ENCODE measurements at regions of chr10 and their contacts with region 1.

Region 1: DNA sequence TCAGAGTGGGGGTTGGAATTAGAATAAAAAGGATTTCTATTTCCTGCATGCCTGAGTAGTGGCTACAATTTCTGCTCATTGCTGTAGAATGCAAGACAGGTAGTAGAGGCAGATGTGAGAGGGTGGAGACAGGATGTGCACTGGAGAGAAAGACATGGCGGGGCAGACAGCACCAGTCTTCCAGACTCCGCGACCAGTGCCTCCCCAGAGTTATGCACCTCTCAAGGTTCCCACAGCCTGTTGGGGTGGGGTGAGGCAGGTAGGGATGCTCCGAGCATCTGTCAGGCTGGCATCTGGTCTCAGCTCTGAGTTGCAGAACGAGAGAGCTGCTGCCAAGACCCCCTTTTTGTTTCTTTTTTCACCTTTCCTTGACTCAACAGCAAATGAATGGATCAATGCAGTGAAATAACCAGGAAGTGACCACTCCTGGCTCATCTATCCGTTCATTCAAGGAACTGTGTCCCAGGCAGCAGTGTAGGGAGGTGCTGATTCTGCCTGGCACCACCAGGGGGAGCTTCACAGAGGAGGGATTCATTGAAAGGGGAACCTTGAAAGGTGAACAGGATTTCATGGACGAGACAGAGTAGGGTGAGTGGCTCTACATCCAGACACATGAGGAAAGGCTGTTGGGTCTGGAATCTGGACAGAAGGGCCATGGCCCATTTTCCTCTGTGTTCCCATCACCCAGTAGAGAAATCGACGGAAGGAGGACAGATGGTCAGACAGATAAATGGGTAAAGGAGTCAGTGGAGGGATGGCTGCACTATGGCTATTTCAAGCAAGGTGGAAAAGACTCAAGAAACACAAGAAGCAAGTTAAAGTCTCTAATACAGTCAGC is 17.2 kb upstream of the SLC18A3 start:
- DNase-seq: peak; percentile 79
- H3K4me3 ChIP-seq: no peak overlapping the region; a peak in 1 of 4 replicates
- H3K27ac ChIP-seq: no peak overlapping the region
- H3K4me1 ChIP-seq: peaks cover 0 to 10% of the 10 kb centered on the region in 2 experiments; a peak in 1 of 4 replicates
- H3K27me3 ChIP-seq: no peaks in the 10 kb centered on the region
- CTCF ChIP-seq: peak; percentile 95
- EP300 ChIP-seq: no peak
- RAD21 ChIP-seq: peak; percentile 72

Region 2: GRCh38 chr10:49521062-49521461 is 71.9 kb before region 1 on chr10:
- CTCF ChIA-PET with region 1: no interaction called
- POLR2A ChIA-PET with region 1: no interaction called
- DNase-seq: no peak
- H3K4me3 ChIP-seq: no peak overlapping the region
- H3K27ac ChIP-seq: no peak overlapping the region
- H3K4me1 ChIP-seq: peaks cover 0 to 3% of the 10 kb centered on the region in 2 experiments; a peak in 1 of 4 replicates
- H3K27me3 ChIP-seq: no peaks in the 10 kb centered on the region
- CTCF ChIP-seq: no peak
- EP300 ChIP-seq: no peak
- RAD21 ChIP-seq: no peak

Region 3: DNA sequence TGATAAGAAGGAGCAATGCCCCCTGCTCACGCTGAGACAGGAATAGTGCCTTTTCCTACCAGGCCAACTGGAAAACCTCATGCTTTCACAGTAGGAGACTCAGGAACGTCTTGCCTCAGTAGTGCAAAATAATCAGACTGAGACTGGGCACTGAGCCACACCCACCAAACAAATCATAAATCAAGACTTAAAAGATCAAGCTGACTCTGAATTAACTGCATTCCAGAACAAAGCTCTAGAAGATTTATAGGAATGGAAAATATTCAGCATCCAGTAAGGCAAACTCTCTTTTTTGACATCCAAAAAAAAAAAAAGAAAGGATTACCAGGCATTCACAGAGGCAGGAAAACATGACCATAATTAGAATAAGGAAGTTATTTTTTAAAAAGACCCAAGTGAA is 13.3 kb before region 1 on chr10:
- CTCF ChIA-PET with region 1: interaction called, 10 read pairs
- POLR2A ChIA-PET with region 1: no interaction called
- DNase-seq: no peak
- H3K4me3 ChIP-seq: no peak overlapping the region
- H3K27ac ChIP-seq: no peak overlapping the region
- H3K4me1 ChIP-seq: no peaks in the 10 kb centered on the region
- H3K27me3 ChIP-seq: no peaks in the 10 kb centered on the region
- CTCF ChIP-seq: no peak
- EP300 ChIP-seq: no peak
- RAD21 ChIP-seq: no peak

Region 4: GRCh38 chr10:49606981-49607535 is 14.1 kb after region 1 on chr10:
- CTCF ChIA-PET with region 1: interaction called, 36 read pairs
- POLR2A ChIA-PET with region 1: interaction called, 7 read pairs
- DNase-seq: no peak
- H3K4me3 ChIP-seq: no peak overlapping the region
- H3K27ac ChIP-seq: peak overlapping the region in 1 of 2 experiments; percentile 22; a peak in 1 of 4 replicates
- H3K4me1 ChIP-seq: peaks cover 0 to 53% of the 10 kb centered on the region in 2 experiments; a peak in 1 of 4 replicates
- H3K27me3 ChIP-seq: no peaks in the 10 kb centered on the region; the same call in 1 of the 2 replicates
- CTCF ChIP-seq: no peak
- EP300 ChIP-seq: no peak
- RAD21 ChIP-seq: no peak

Region 5: GRCh38 chr10:49761789-49762565 is 169.0 kb after region 1 on chr10 and contains the start of gene OGDHL:
- CTCF ChIA-PET with region 1: interaction called, 32 read pairs
- POLR2A ChIA-PET with region 1: interaction called, 4 read pairs
- DNase-seq: peak; percentile 97
- H3K4me3 ChIP-seq: peak within 1 kb of the TSS; percentile 71 to 92
- H3K27ac ChIP-seq: peak within 1 kb of the TSS in 1 of 2 experiments; percentile 83; a peak in 2 of 4 replicates
- H3K4me1 ChIP-seq: peaks cover 0 to 29% of the 10 kb centered on the region in 2 experiments; a peak in 1 of 4 replicates
- H3K27me3 ChIP-seq: no peaks in the 10 kb centered on the region; the same call in 1 of the 2 replicates
- CTCF ChIP-seq: no peak
- EP300 ChIP-seq: no peak
- RAD21 ChIP-seq: no peak
- polyA plus RNA-seq, gene OGDHL: 25.4 and 32.6 TPM in 2 replicates

Region 6: GRCh38 chr10:49783645-49784044 is 190.7 kb after region 1 on chr10:
- CTCF ChIA-PET with region 1: interaction called, 30 read pairs
- POLR2A ChIA-PET with region 1: no interaction called
- DNase-seq: no peak
- H3K4me3 ChIP-seq: no peak overlapping the region
- H3K27ac ChIP-seq: no peak overlapping the region
- H3K4me1 ChIP-seq: peaks cover 0 to 3% of the 10 kb centered on the region in 2 experiments; a peak in 1 of 4 replicates
- H3K27me3 ChIP-seq: no peaks in the 10 kb centered on the region
- CTCF ChIP-seq: no peak
- EP300 ChIP-seq: no peak
- RAD21 ChIP-seq: peak; percentile 52

Measured in SK-N-SH (cell line).